WTC11 (cell line): ENCODE measurements at regions of chr20 and their contacts with region 1.

Region 1: GRCh38 chr20:54207743-54208547 is at the start of gene PFDN4:
- DNase-seq: peak; percentile 80
- ATAC-seq: peak; percentile 86
- H3K4me3 Mint-ChIP-seq: peak within 1 kb of the TSS; percentile 96
- H3K27ac Mint-ChIP-seq: peak within 1 kb of the TSS; percentile 100
- H3K4me1 Mint-ChIP-seq: peaks cover 21% of the 10 kb centered on the region
- H3K27me3 Mint-ChIP-seq: no peaks in the 10 kb centered on the region
- CTCF ChIP-seq: peak; percentile 40
- total RNA-seq, gene PFDN4: 90.1 to 94.4 TPM (median 90.5 TPM) in 3 replicates

Region 2: GRCh38 chr20:54093423-54094267 is 114.3 kb before region 1 on chr20:
- CTCF ChIA-PET with region 1: interaction called, 10 read pairs
- POLR2A ChIA-PET with region 1: no interaction called
- DNase-seq: no peak
- ATAC-seq: no peak
- H3K4me3 Mint-ChIP-seq: no peak overlapping the region
- H3K27ac Mint-ChIP-seq: no peak overlapping the region
- H3K4me1 Mint-ChIP-seq: no peaks in the 10 kb centered on the region
- H3K27me3 Mint-ChIP-seq: peaks cover 3% of the 10 kb centered on the region; the same call in 1 of the 2 replicates
- CTCF ChIP-seq: no peak

Region 3: DNA sequence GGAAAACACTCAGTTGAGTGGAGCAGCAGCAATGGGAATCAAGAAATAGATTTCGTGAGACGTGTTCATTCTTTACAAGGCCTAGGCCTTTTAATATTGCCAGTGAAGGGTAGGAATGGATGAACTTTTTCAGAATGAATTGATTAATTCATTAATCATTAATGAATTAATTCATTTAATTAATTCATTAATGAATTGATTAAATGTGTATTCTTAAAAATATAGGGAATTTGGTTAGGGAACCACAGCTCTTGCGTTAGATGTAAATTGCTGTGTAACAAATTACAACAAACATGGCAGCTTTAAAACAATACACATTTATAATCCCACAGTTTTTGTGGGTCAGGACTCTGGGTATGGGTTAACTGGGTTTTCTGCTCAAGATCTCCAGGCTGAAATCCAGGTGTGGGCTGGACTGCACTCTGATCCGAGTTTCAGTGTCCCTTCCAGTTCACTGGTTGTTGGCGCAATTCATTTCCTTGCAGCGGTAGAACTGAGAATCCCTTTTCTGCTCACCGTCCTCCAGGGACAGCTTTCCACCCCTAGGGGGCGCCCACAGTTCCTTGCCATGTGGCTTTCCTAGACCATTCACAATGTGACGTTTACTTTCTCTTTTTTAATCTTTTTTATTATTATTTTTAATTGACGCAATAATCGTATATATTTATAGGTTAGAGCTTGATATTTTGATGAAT is 104.7 kb before region 1 on chr20:
- CTCF ChIA-PET with region 1: interaction called, 11 read pairs
- POLR2A ChIA-PET with region 1: no interaction called
- DNase-seq: peak; percentile 88
- ATAC-seq: peak; percentile 90
- H3K4me3 Mint-ChIP-seq: no peak overlapping the region
- H3K27ac Mint-ChIP-seq: no peak overlapping the region
- H3K4me1 Mint-ChIP-seq: peaks cover 5% of the 10 kb centered on the region
- H3K27me3 Mint-ChIP-seq: peaks cover 3% of the 10 kb centered on the region
- CTCF ChIP-seq: peak; percentile 94

Region 4: GRCh38 chr20:54188132-54188849 is 19.7 kb before region 1 on chr20:
- CTCF ChIA-PET with region 1: no interaction called
- POLR2A ChIA-PET with region 1: no interaction called
- DNase-seq: no peak
- ATAC-seq: no peak
- H3K4me3 Mint-ChIP-seq: no peak overlapping the region
- H3K27ac Mint-ChIP-seq: no peak overlapping the region
- H3K4me1 Mint-ChIP-seq: no peaks in the 10 kb centered on the region
- H3K27me3 Mint-ChIP-seq: no peaks in the 10 kb centered on the region; the same call in 1 of the 2 replicates
- CTCF ChIP-seq: no peak